ENCODE measurements at regions of chr12 and their contacts with region 1.

Region 1: DNA sequence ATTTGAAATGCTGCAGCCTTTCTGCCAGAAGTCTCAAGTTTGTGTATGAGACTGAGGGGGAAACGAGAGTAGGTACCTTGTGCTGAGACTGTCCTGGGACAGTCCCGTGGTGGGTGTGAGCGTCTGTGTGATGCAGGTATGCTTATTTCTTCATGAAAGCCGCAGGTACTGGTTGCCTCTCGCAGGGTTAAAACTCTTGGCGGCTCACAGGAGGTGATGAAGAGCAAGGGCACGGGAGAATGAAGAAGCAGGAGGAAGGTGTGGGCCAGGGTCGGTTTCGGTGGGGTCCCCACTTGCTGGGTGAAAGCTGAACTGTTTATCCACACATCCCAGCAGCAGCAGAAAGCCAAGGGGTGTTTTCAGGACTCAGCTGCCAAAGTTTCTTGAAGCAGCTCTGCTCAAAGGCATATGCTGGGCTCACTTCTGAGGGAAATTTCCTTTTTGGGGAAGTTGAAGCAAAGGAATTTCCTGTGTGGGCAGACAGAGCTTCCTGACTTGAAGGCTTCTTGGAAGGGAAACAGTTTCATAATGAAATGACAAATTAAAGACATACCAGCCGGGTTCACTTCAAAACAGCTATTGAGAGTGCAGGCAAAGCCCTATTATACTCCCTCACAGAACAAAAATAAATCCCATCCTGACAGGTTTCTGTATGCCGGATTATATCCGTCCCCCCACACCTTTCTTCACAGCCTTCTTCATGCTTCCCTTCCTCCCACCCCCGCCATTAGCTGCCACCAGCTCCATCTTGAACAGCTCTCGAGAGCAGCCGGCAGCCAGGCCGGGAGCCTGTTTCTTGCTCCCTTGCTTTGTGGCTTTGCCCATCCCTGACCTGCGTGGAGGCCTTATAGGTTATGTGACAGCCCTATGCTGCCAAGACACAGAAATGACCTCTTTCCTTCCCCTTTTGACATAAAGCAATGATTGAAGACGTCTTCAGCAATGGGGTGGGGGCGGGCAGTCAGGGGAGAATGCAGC is 116.6 kb downstream of the ETV6 start:
- DNase-seq: peak in 1 of 2 donors; percentile 54
- ATAC-seq: peak; percentile 54
- H3K4me3 ChIP-seq: no peak overlapping the region
- H3K27ac ChIP-seq: peak overlapping the region; percentile 32 to 99
- H3K4me1 ChIP-seq: peaks cover 3 to 12% of the 10 kb centered on the region in 2 donors
- H3K27me3 ChIP-seq: no peaks in the 10 kb centered on the region

Region 2: DNA sequence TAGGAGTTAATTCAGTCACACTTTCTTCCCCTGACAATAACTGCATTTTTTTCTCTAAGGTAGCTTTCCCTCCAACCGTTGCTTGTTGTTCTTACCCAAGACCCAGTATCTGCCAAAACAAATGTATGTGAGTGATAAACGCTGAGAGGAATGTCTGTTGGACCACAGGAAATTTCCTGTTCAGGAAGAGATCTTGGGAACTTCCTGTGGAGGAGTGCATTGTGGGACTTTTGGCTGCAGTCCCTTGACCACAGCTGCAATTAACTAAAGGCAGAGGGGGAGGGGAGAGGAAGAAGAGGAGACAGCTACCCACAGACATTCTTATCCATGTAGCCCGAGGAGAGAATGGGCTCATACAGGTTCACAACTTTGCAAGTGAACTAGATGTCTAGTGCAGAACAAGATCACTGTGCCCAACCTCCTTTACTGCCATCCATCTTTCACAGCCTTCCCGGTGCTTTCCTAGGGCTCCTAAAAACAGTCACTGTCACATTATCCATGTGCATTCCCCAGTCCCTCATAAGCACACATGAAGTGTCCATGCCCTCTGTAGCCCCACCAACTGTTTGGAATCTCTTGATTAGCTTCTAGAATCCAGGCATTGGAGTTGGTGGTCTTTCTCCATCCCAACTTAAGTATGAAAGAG is 32.9 kb after region 1 on chr12:
- intact Hi-C with region 1: loop called in 1 of 2 experiments (anchors 2 kb)
- DNase-seq: no peak
- ATAC-seq: no peak
- H3K4me3 ChIP-seq: no peak overlapping the region
- H3K27ac ChIP-seq: peak overlapping the region; percentile 83 to 86
- H3K4me1 ChIP-seq: peaks cover 5 to 21% of the 10 kb centered on the region in 2 donors
- H3K27me3 ChIP-seq: no peaks in the 10 kb centered on the region

Region 3: GRCh38 chr12:11822081-11822834 is 56.2 kb after region 1 on chr12:
- intact Hi-C with region 1: loop called in 1 of 2 experiments (anchors 5 kb)
- DNase-seq: no peak
- ATAC-seq: no peak
- H3K4me3 ChIP-seq: no peak overlapping the region
- H3K27ac ChIP-seq: no peak overlapping the region
- H3K4me1 ChIP-seq: peaks cover under 1 to 2% of the 10 kb centered on the region in 2 donors
- H3K27me3 ChIP-seq: no peaks in the 10 kb centered on the region

Region 4: DNA sequence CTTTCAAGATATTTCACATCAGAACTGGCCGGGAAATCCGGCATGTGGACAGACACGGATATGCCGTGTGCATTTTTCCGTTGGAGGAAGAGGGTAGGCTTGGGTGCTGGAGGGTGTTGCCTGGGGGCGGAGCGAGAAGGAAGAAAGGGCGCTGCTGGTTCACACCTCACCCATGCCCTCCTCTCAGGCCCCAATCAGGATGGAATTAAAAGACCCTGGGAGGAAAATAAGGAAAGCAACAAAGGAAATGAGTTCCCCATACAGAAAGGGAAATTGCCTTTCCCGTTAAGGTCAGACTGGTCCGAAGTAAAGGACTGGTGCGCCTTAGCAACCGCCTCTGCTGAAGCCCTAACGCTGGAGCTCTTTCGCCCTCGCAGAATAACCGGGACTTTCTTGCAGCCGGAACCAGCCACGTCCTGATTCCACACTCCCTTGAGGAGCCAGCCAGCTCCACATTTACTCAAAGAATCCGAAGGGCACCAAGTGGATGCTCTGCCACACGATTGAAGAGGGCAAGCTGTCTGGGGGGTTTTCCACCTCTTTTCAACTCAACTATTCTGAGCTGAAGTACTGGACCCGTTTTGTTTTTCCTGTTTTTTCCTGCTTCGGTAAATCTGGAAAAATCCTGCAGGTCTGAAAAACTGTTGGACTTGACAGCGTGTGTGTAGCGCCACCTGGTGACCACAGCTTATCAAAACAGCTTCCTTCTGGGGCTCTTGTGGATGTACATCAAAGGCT is 266.9 kb after region 1 on chr12:
- intact Hi-C with region 1: loop called in 1 of 2 experiments (anchors 10 kb)
- DNase-seq: peak; percentile 84 to 88
- ATAC-seq: peak; percentile 89
- H3K4me3 ChIP-seq: peak overlapping the region; percentile 27 to 94
- H3K27ac ChIP-seq: peak overlapping the region; percentile 20 to 53
- H3K4me1 ChIP-seq: no peaks in the 10 kb centered on the region
- H3K27me3 ChIP-seq: no peaks in the 10 kb centered on the region